WTC11 (cell line): ENCODE measurements at regions of chr4 and their contacts with region 1.

Region 1: GRCh38 chr4:173301518-173302201 is 32.5 kb downstream of the HMGB2 start:
- DNase-seq: no peak
- ATAC-seq: no peak
- H3K4me3 Mint-ChIP-seq: no peak overlapping the region
- H3K27ac Mint-ChIP-seq: no peak overlapping the region
- H3K4me1 Mint-ChIP-seq: peaks cover 10% of the 10 kb centered on the region
- H3K27me3 Mint-ChIP-seq: no peaks in the 10 kb centered on the region
- CTCF ChIP-seq: peak; percentile 64

Region 2: GRCh38 chr4:173019711-173020110 is 281.9 kb before region 1 on chr4:
- CTCF ChIA-PET with region 1: interaction called, 107 read pairs
- POLR2A ChIA-PET with region 1: no interaction called
- DNase-seq: no peak
- ATAC-seq: peak; percentile 43
- H3K4me3 Mint-ChIP-seq: no peak overlapping the region
- H3K27ac Mint-ChIP-seq: no peak overlapping the region
- H3K4me1 Mint-ChIP-seq: peaks cover 45% of the 10 kb centered on the region
- H3K27me3 Mint-ChIP-seq: no peaks in the 10 kb centered on the region
- CTCF ChIP-seq: no peak

Region 3: GRCh38 chr4:173174594-173175012 is 127.1 kb before region 1 on chr4:
- CTCF ChIA-PET with region 1: interaction called, 15 read pairs
- POLR2A ChIA-PET with region 1: no interaction called
- DNase-seq: no peak
- ATAC-seq: no peak
- H3K4me3 Mint-ChIP-seq: no peak overlapping the region
- H3K27ac Mint-ChIP-seq: peak overlapping the region; percentile 21; the same call in 1 of the 2 replicates
- H3K4me1 Mint-ChIP-seq: peaks cover 81% of the 10 kb centered on the region
- H3K27me3 Mint-ChIP-seq: no peaks in the 10 kb centered on the region
- CTCF ChIP-seq: no peak

Region 4: DNA sequence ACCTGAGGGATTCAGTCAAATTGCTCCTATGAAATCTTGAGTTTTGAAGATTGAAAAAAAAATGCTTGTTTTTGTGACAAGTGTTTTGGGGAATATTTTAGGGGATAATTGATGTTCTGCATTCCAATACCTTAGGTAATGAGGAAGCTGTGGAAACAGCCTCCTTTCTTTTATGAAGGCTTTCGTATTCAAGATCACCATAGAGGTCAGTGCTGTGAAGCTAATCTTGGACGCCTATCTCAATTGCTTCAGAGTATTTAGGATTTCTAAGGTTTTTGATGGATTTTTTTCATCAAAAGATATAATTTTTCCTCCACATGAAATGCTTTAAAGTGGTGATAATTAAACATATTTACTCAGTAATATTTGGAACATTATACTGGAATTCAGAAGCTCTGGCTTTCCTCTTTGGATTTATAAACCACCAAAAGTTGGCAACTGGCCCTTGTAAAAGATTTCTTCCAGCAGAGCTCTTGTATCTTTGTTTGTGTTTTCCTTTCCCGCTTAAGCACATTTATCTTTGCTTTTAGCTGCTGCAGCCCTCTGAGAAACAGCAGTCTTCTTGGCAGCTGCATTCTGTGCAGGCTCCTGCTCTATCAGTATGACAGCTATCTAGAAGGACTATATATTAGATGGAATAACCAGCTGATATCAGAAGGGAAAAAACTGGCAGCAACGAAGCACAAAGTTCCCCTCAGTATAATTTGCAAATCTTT is 31.2 kb before region 1 on chr4:
- CTCF ChIA-PET with region 1: interaction called, 24 read pairs
- POLR2A ChIA-PET with region 1: no interaction called
- DNase-seq: no peak
- ATAC-seq: 0 out of 2 replicates have a peak, but pooled peaks have one; percentile 24
- H3K4me3 Mint-ChIP-seq: no peak overlapping the region
- H3K27ac Mint-ChIP-seq: no peak overlapping the region
- H3K4me1 Mint-ChIP-seq: peaks cover 33% of the 10 kb centered on the region
- H3K27me3 Mint-ChIP-seq: no peaks in the 10 kb centered on the region
- CTCF ChIP-seq: no peak

Region 5: GRCh38 chr4:173334085-173334772 is 32.6 kb after region 1 on chr4 and contains the start of gene HMGB2:
- CTCF ChIA-PET with region 1: interaction called, 17 read pairs
- POLR2A ChIA-PET with region 1: interaction called, 5 read pairs
- DNase-seq: peak; percentile 100
- ATAC-seq: peak; percentile 87
- H3K4me3 Mint-ChIP-seq: peak within 1 kb of the TSS; percentile 97
- H3K27ac Mint-ChIP-seq: peak within 1 kb of the TSS; percentile 100
- H3K4me1 Mint-ChIP-seq: peaks cover 36% of the 10 kb centered on the region
- H3K27me3 Mint-ChIP-seq: no peaks in the 10 kb centered on the region
- CTCF ChIP-seq: no peak
- total RNA-seq, gene HMGB2: 279 to 294 TPM (median 288 TPM) in 3 replicates

Region 6: DNA sequence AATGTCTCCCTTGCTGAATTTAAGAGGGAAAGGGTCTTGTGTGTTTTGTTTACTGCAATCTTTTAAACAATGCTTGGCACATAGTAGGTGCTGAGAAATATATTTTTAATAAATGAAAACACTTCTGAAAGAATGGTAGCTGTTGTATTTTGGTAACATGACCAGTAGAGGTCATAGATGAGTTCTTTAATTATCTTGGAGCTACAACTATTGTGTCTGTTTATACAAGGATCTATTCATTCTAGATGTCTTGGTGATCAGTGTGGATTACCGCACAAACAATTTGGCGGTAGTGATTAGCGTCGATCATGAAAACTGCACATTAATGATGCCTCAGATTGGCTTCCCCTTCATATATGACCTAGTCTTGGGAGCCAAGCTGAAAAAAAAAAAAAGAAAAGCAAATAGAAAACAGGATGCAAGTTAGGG is 118.7 kb after region 1 on chr4:
- CTCF ChIA-PET with region 1: interaction called, 27 read pairs
- POLR2A ChIA-PET with region 1: no interaction called
- DNase-seq: no peak
- ATAC-seq: 0 out of 2 replicates have a peak, but pooled peaks have one; percentile 36
- H3K4me3 Mint-ChIP-seq: no peak overlapping the region
- H3K27ac Mint-ChIP-seq: no peak overlapping the region
- H3K4me1 Mint-ChIP-seq: no peaks in the 10 kb centered on the region
- H3K27me3 Mint-ChIP-seq: no peaks in the 10 kb centered on the region
- CTCF ChIP-seq: no peak